CD8-positive, alpha-beta T cell (primary cell): ENCODE measurements at regions of chr12 and their contacts with region 1.

Region 1: DNA sequence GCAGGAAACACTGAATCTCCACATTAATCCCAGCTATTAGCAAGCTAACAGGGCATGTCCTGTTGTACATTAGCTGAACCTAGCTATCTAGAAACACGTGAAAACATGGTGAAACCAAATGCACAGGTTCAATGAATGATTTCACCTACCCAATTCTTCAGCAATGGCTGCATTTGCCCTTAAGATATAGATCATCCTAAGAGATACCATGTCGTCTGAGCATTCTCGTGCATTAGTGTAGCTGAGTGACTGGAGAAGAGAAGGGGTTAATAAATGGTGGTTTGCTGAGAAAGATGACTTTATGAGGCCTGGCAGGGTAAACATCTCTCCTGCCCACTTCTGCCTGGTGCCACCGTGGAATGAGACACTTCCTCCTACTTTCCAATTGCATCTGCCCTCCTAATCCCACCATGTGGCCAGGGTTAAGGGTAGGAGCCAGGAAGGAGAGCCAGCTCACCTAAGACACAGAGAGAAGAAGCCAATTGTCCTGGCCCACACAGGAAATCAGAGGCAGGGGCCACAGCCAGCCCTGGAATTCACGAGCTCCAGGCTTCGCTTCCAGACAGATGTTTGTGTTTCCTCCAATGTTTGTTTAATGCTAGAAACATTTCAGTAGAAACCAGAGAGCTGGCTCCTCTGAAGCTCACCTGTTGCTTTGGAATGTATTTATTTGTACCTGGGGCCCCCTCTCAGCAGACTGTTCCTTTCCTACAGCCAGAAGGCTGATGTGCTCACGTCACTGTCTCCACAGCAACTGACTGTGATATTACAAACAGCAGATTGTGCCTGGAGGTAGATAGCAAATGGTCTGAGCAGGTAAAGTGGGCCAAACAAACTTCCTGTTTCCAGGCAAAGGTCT is 126.0 kb upstream of the PARP11 start:
- DNase-seq: peak in 3 of 9 experiments; percentile 32 to 56 (median 33)
- ATAC-seq: peak; percentile 69
- H3K4me3 ChIP-seq: no peak overlapping the region
- H3K4me3 Mint-ChIP-seq: no peak overlapping the region
- H3K27ac ChIP-seq: no peak overlapping the region
- H3K27ac Mint-ChIP-seq: no peak overlapping the region
- H3K4me1 ChIP-seq: peaks cover 15% of the 10 kb centered on the region
- H3K4me1 Mint-ChIP-seq: peaks cover 24% of the 10 kb centered on the region
- H3K27me3 ChIP-seq: no peaks in the 10 kb centered on the region
- H3K27me3 Mint-ChIP-seq: no peaks in the 10 kb centered on the region
- CTCF ChIP-seq: no peak

Region 2: GRCh38 chr12:3712209-3712992 is 286.8 kb before region 1 on chr12:
- CTCF ChIA-PET with region 1: no interaction called
- POLR2A ChIA-PET with region 1: no interaction called
- intact Hi-C with region 1: no loop called
- DNase-seq: no peak
- ATAC-seq: no peak
- H3K4me3 ChIP-seq: no peak overlapping the region
- H3K4me3 Mint-ChIP-seq: no peak overlapping the region
- H3K27ac ChIP-seq: no peak overlapping the region
- H3K27ac Mint-ChIP-seq: no peak overlapping the region
- H3K4me1 ChIP-seq: no peaks in the 10 kb centered on the region
- H3K4me1 Mint-ChIP-seq: peaks cover 18% of the 10 kb centered on the region
- H3K27me3 ChIP-seq: no peaks in the 10 kb centered on the region
- H3K27me3 Mint-ChIP-seq: no peaks in the 10 kb centered on the region
- CTCF ChIP-seq: no peak

Region 3: GRCh38 chr12:3947781-3948180 is 51.4 kb before region 1 on chr12:
- CTCF ChIA-PET with region 1: no interaction called
- POLR2A ChIA-PET with region 1: no interaction called
- intact Hi-C with region 1: no loop called
- DNase-seq: peak in 2 of 9 experiments; percentile 55 to 75
- ATAC-seq: peak; percentile 75
- H3K4me3 ChIP-seq: no peak overlapping the region
- H3K4me3 Mint-ChIP-seq: peak overlapping the region; percentile 36
- H3K27ac ChIP-seq: peak overlapping the region; percentile 38 to 61
- H3K27ac Mint-ChIP-seq: peak overlapping the region; percentile 98
- H3K4me1 ChIP-seq: peaks cover 53% of the 10 kb centered on the region
- H3K4me1 Mint-ChIP-seq: peaks cover 62% of the 10 kb centered on the region
- H3K27me3 ChIP-seq: no peaks in the 10 kb centered on the region
- H3K27me3 Mint-ChIP-seq: no peaks in the 10 kb centered on the region
- CTCF ChIP-seq: no peak

Region 4: DNA sequence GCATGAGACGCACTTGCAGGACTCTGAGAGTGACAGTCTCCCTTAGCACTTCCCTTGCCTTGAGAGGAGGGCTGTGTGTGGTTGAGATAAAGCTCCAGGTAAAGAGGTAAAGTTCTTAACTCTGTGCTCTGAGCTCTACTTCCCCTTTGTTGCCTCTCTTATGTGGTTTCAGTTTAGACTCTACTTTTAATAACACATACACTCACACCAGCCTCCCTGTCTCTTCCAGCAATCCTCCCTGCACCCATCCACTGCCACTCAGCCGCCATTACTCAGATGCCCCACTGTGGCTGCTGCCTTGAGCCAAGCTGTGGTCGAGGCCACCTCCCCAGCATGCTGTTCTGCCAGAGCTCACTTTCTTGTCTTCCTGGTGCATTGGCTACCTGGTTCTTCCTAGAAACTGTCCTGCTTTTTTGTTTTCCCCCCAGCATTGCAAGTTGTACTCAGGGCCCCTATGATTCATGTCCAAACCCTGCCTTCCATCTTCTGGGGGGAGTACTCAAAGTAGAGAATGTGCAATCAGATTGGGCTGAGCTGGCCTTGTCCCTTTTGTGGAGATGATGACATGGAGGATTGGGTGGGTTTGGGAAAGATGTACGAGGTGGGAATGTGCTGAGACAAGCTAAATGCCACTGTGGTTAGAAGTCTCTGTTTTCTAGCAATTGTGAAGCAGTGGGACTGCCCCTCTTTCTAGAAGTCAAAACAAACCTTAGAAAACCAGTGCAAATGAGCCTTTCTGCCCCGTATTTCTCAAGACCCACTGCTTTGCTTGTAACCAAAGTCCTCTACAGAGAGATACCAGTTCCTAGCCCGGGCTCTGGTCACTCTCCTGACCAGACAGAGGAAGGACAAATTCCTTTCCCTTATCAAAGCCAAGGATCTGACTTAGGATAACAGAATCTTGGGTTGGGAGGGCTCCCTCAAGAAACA is 10.4 kb before region 1 on chr12:
- CTCF ChIA-PET with region 1: interaction called, 10 read pairs
- POLR2A ChIA-PET with region 1: interaction called, 7 read pairs
- intact Hi-C with region 1: no loop called
- DNase-seq: peak in 6 of 9 experiments; percentile 26 to 60 (median 30)
- ATAC-seq: peak; percentile 89
- H3K4me3 ChIP-seq: peak overlapping the region in 1 of 2 experiments; percentile 2
- H3K4me3 Mint-ChIP-seq: peak overlapping the region; percentile 60
- H3K27ac ChIP-seq: peak overlapping the region; percentile 5 to 52
- H3K27ac Mint-ChIP-seq: peak overlapping the region; percentile 91
- H3K4me1 ChIP-seq: peaks cover 29% of the 10 kb centered on the region
- H3K4me1 Mint-ChIP-seq: peaks cover 30% of the 10 kb centered on the region
- H3K27me3 ChIP-seq: no peaks in the 10 kb centered on the region
- H3K27me3 Mint-ChIP-seq: no peaks in the 10 kb centered on the region
- CTCF ChIP-seq: no peak

Region 5: GRCh38 chr12:4037747-4038312 is 38.6 kb after region 1 on chr12:
- CTCF ChIA-PET with region 1: interaction called, 7 read pairs
- POLR2A ChIA-PET with region 1: no interaction called
- intact Hi-C with region 1: loop called in 1 of 2 experiments (anchors 2 kb)
- DNase-seq: peak in 4 of 9 experiments; percentile 18 to 42 (median 24)
- ATAC-seq: no peak
- H3K4me3 ChIP-seq: no peak overlapping the region
- H3K4me3 Mint-ChIP-seq: no peak overlapping the region
- H3K27ac ChIP-seq: no peak overlapping the region
- H3K27ac Mint-ChIP-seq: no peak overlapping the region
- H3K4me1 ChIP-seq: no peaks in the 10 kb centered on the region
- H3K4me1 Mint-ChIP-seq: no peaks in the 10 kb centered on the region
- H3K27me3 ChIP-seq: no peaks in the 10 kb centered on the region
- H3K27me3 Mint-ChIP-seq: no peaks in the 10 kb centered on the region
- CTCF ChIP-seq: peak; percentile 42

Region 6: DNA sequence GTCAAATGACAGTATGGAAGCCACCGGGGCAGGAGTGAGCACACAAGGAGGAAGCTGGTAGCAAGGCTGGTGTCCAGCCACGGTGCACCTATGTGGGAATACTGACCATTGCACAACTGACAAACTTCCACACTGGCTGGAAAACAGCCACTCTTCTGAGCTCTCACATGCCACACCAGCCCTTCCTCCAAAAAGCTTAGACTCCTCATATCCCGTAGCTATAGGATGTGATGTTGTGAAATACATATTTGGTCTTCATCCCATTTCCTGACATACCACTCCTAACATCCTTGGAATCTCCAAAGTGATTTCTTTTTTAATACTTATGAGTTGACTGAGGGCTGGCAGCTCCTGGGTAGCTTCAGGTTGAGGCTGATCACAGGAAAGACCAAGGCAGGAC is 1536.3 kb after region 1 on chr12:
- CTCF ChIA-PET with region 1: no interaction called
- POLR2A ChIA-PET with region 1: no interaction called
- intact Hi-C with region 1: no loop called
- DNase-seq: no peak
- ATAC-seq: no peak
- H3K4me3 ChIP-seq: no peak overlapping the region
- H3K4me3 Mint-ChIP-seq: no peak overlapping the region
- H3K27ac ChIP-seq: no peak overlapping the region
- H3K27ac Mint-ChIP-seq: no peak overlapping the region
- H3K4me1 ChIP-seq: no peaks in the 10 kb centered on the region
- H3K4me1 Mint-ChIP-seq: no peaks in the 10 kb centered on the region
- H3K27me3 ChIP-seq: no peaks in the 10 kb centered on the region
- H3K27me3 Mint-ChIP-seq: peaks cover 25% of the 10 kb centered on the region
- CTCF ChIP-seq: no peak